Heart right ventricle (tissue), 16 donors: ENCODE measurements at regions of chr5 and their contacts with region 1.

Region 1: GRCh38 chr5:31825518-31826068 is 186.7 kb downstream of the PDZD2 start:
- DNase-seq: peak in 1 of 2 donors; percentile 61
- ATAC-seq: peak; percentile 69 to 92 (median 82)
- H3K4me3 ChIP-seq: no peak overlapping the region
- H3K27ac ChIP-seq: no peak overlapping the region
- H3K4me1 ChIP-seq: peaks cover 0 to 20% (median 13%) of the 10 kb centered on the region in 9 donors
- H3K27me3 ChIP-seq: no peaks in the 10 kb centered on the region
- CTCF ChIP-seq: peak; percentile 36 to 87 (median 71)

Region 2: DNA sequence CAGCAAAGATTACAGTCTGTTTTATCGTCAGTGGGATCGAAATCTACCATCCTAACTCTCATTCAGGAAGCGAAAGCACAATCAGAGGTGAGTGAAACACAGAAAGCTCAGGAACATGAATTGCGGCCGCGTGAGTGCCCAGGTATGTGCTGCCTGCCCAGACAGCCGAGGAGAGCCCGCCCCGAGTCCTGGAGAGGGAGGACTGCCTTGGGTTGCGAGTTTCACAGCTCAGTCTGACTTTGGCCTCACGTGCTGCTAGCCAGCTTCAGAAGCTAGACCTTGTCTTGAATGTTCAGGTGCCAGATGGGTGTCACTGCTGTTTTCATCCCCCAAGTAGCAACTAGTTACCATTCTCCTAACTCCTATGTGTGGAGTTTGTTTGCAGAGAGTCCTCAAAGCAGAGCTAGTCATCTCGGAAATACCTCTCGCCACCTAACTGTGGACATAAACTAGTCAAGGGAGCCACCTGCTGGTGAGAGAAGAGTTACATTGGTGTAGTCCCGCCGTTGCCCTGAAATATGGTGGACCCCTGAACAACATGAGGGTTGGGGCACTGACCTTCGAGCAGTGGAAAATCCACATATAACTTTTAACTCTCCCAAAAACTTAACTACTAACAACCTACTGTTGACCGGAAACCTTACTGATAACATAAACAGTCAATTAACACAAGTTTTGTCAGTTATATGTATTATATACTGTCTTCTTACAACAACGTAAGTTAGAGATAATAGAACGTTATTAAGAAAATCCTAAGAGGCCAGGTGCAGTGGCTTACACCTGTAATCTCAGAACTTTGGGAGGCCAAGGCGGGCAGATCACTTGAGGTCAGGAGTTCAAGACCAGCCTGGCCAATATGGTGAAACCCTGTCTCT is 267.6 kb after region 1 on chr5:
- intact Hi-C with region 1: loop called in 6 of 10 experiments (anchors 1 to 10 kb)
- DNase-seq: peak in 1 of 2 donors; percentile 74
- ATAC-seq: peak; percentile 67 to 85 (median 81)
- H3K4me3 ChIP-seq: no peak overlapping the region
- H3K27ac ChIP-seq: peak overlapping the region in 1 of 10 donors; percentile 6
- H3K4me1 ChIP-seq: peaks cover 1 to 35% (median 19%) of the 10 kb centered on the region in 9 donors
- H3K27me3 ChIP-seq: no peaks in the 10 kb centered on the region
- CTCF ChIP-seq: peak; percentile 49 to 82 (median 72)

Region 3: GRCh38 chr5:32413466-32414263 is 588.1 kb after region 1 on chr5:
- intact Hi-C with region 1: no loop called
- DNase-seq: no peak
- ATAC-seq: peak in 4 of 8 donors; percentile 50 to 58 (median 54)
- H3K4me3 ChIP-seq: no peak overlapping the region
- H3K27ac ChIP-seq: peak overlapping the region in 2 of 10 donors; percentile 4 to 48
- H3K4me1 ChIP-seq: peaks cover 0 to 28% (median 14%) of the 10 kb centered on the region in 9 donors
- H3K27me3 ChIP-seq: no peaks in the 10 kb centered on the region
- CTCF ChIP-seq: no peak